HepG2 (cell line): ENCODE measurements at regions of chr4 and their contacts with region 1.

Region 1: GRCh38 chr4:102169345-102169744 is 175.9 kb downstream of the SLC39A8 start:
- DNase-seq: no peak
- ATAC-seq: no peak; the same call in 2 of the 3 replicates
- H3K4me3 ChIP-seq: no peak overlapping the region
- H3K27ac ChIP-seq: no peak overlapping the region
- H3K4me1 ChIP-seq: no peaks in the 10 kb centered on the region
- H3K27me3 ChIP-seq: no peaks in the 10 kb centered on the region
- CTCF ChIP-seq: no peak
- EP300 ChIP-seq: no peak
- POLR2A ChIP-seq: no peak
- RAD21 ChIP-seq: no peak

Region 2: GRCh38 chr4:101961144-101961543 is 208.2 kb before region 1 on chr4:
- CTCF ChIA-PET with region 1: no interaction called
- POLR2A ChIA-PET with region 1: no interaction called
- in situ Hi-C with region 1: no loop called
- intact Hi-C with region 1: no loop called
- DNase-seq: no peak
- ATAC-seq: no peak
- H3K4me3 ChIP-seq: no peak overlapping the region
- H3K27ac ChIP-seq: no peak overlapping the region
- H3K4me1 ChIP-seq: no peaks in the 10 kb centered on the region
- H3K27me3 ChIP-seq: no peaks in the 10 kb centered on the region
- CTCF ChIP-seq: no peak
- EP300 ChIP-seq: no peak
- POLR2A ChIP-seq: no peak
- RAD21 ChIP-seq: no peak

Region 3: GRCh38 chr4:102153391-102153790 is 16.0 kb before region 1 on chr4:
- CTCF ChIA-PET with region 1: no interaction called
- POLR2A ChIA-PET with region 1: no interaction called
- in situ Hi-C with region 1: no loop called
- intact Hi-C with region 1: loop called (anchors 1 kb)
- DNase-seq: no peak
- ATAC-seq: no peak
- H3K4me3 ChIP-seq: no peak overlapping the region
- H3K27ac ChIP-seq: no peak overlapping the region
- H3K4me1 ChIP-seq: no peaks in the 10 kb centered on the region
- H3K27me3 ChIP-seq: no peaks in the 10 kb centered on the region
- CTCF ChIP-seq: no peak
- EP300 ChIP-seq: no peak
- POLR2A ChIP-seq: no peak
- RAD21 ChIP-seq: no peak